T-cell (primary cell): ENCODE measurements at regions of chr1 and their contacts with region 1.

Region 1: GRCh38 chr1:205645519-205645918 is 13.7 kb upstream of the ELK4 start:
- DNase-seq: no peak
- ATAC-seq: no peak
- H3K4me3 ChIP-seq: no peak overlapping the region
- H3K4me3 Mint-ChIP-seq: no peak overlapping the region
- H3K27ac ChIP-seq: no peak overlapping the region
- H3K27ac Mint-ChIP-seq: no peak overlapping the region
- H3K4me1 ChIP-seq: no peaks in the 10 kb centered on the region
- H3K4me1 Mint-ChIP-seq: no peaks in the 10 kb centered on the region
- H3K27me3 ChIP-seq: peaks cover 0 to 11% of the 10 kb centered on the region in 2 experiments
- H3K27me3 Mint-ChIP-seq: peaks cover 12 to 18% of the 10 kb centered on the region in 2 donors

Region 2: DNA sequence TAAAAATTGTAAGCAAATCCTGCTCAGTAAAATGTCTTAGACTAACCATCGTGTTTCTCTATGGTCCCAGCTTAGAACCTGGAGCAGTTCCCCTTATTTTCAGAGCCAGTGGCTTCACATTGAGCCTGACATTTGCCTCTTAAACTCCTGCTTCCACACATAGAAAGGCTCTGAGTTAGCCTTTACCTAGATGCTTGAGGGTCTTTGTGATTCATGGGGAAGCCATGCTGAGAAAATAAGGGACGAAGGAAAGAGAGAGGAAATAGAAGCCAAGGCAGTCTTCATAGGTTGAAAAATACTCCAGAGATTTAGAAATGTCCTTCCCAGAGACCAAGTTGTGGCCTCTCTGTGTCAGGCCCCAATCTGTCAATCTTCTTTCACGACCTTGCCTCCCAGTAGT is 507.6 kb before region 1 on chr1:
- CTCF ChIA-PET with region 1: no interaction called
- POLR2A ChIA-PET with region 1: no interaction called
- DNase-seq: no peak
- ATAC-seq: no peak
- H3K4me3 ChIP-seq: no peak overlapping the region
- H3K4me3 Mint-ChIP-seq: no peak overlapping the region
- H3K27ac ChIP-seq: no peak overlapping the region
- H3K27ac Mint-ChIP-seq: no peak overlapping the region
- H3K4me1 ChIP-seq: peaks cover 0 to 9% of the 10 kb centered on the region in 2 experiments
- H3K4me1 Mint-ChIP-seq: peaks cover 6 to 12% (median 10%) of the 10 kb centered on the region in 3 donors
- H3K27me3 ChIP-seq: no peaks in the 10 kb centered on the region
- H3K27me3 Mint-ChIP-seq: no peaks in the 10 kb centered on the region

Region 3: DNA sequence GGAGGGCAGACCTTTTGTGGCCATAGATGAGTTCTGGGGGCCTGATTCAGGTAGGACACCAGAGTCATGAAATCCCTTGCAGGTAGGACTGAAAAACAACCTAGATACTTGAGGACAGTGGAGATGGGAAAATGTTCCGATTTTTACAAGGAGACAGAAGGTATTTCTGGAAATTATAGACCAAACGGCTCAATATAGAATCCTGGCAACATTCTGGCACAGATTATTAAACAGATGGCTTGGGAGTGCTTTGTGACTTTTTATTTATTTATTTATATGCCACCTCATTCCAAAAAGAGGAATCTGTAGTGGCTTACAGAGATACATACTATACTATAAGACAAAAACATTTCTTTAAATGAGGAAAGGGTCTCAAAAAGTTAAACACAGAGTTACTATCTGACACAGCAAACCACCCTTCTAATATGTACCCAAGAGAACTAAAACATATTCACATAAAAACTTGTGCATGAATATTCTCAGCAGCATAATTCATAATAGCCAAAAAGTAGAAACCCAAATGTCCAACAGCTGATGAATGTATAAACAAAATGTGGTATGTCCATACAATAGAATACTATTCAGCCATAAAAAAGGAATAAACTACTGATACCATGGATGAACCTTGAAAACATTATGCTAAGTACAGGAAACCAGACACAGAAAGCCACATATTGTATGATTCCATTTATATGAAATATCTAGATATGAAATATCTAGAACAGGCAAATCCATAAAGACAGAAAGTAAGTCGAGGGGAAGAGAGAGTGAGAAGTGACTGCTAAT is 91.3 kb before region 1 on chr1:
- CTCF ChIA-PET with region 1: no interaction called
- POLR2A ChIA-PET with region 1: interaction called in 1 of 2 experiments, 10 read pairs
- DNase-seq: no peak
- ATAC-seq: no peak
- H3K4me3 ChIP-seq: no peak overlapping the region
- H3K4me3 Mint-ChIP-seq: no peak overlapping the region
- H3K27ac ChIP-seq: no peak overlapping the region
- H3K27ac Mint-ChIP-seq: no peak overlapping the region
- H3K4me1 ChIP-seq: no peaks in the 10 kb centered on the region
- H3K4me1 Mint-ChIP-seq: no peaks in the 10 kb centered on the region
- H3K27me3 ChIP-seq: peaks cover 0 to 30% of the 10 kb centered on the region in 2 experiments
- H3K27me3 Mint-ChIP-seq: peaks cover 53 to 57% of the 10 kb centered on the region in 2 donors

Region 4: GRCh38 chr1:205626216-205626615 is 19.3 kb before region 1 on chr1:
- CTCF ChIA-PET with region 1: no interaction called
- POLR2A ChIA-PET with region 1: no interaction called
- DNase-seq: no peak
- ATAC-seq: no peak
- H3K4me3 ChIP-seq: no peak overlapping the region
- H3K4me3 Mint-ChIP-seq: peak overlapping the region in 2 of 3 donors; percentile 17 to 47
- H3K27ac ChIP-seq: no peak overlapping the region
- H3K27ac Mint-ChIP-seq: peak overlapping the region; percentile 29 to 49
- H3K4me1 ChIP-seq: peaks cover 26 to 37% of the 10 kb centered on the region in 2 experiments
- H3K4me1 Mint-ChIP-seq: peaks cover 71 to 77% (median 72%) of the 10 kb centered on the region in 3 donors
- H3K27me3 ChIP-seq: no peaks in the 10 kb centered on the region
- H3K27me3 Mint-ChIP-seq: no peaks in the 10 kb centered on the region

Region 5: DNA sequence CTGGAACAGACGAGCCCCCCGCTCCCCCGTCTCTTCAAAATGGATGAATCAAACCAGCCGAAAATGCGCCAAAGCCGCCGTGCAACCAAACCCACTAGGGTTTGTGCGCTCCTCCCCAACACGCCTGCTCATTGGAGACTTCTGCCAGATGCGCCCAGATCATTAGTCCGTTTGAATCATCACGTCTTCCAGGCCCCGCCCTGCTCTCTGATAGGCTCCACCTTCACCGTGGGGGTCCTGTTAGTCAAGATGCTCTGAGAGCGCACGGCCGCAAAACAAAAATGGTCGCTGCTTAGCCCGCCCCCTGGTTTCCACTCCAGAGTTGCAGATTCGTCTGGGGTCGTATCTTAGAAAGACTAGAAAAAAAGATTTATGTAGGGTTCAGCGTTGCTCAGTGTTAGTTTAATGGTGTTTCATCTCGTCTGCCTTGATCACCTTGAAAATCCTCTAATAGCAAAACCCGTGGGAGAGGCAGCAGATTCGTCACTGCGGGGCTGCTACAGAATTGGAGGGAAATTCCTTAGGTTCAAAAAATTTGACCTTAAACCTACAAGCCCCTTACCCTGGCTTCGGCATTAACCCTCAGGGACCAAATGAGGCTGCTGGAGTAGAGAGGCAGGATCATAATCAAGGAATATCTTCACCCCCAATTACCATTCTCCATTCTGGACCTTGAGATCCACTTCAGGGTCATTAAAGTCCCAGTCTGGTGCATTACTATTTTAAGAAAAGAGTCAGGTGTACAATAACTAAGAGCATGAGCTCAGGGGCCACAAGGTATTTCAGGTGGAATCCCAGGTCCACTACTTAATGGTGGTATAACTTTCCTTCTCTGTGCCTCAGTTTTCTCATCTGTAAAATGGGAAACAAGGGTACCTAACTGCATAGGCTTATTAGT is 104.9 kb after region 1 on chr1 and contains the start of gene NUCKS1:
- CTCF ChIA-PET with region 1: no interaction called
- POLR2A ChIA-PET with region 1: no interaction called
- DNase-seq: peak; percentile 92 to 99 (median 98)
- ATAC-seq: peak; percentile 82 to 88 (median 88)
- H3K4me3 ChIP-seq: peak within 1 kb of the TSS; percentile 86 to 90
- H3K4me3 Mint-ChIP-seq: peak within 1 kb of the TSS; percentile 93 to 98 (median 96)
- H3K27ac ChIP-seq: peak within 1 kb of the TSS; percentile 86
- H3K27ac Mint-ChIP-seq: peak within 1 kb of the TSS; percentile 96 to 99
- H3K4me1 ChIP-seq: peaks cover 8 to 23% of the 10 kb centered on the region in 2 experiments
- H3K4me1 Mint-ChIP-seq: peaks cover 34 to 41% (median 38%) of the 10 kb centered on the region in 3 donors
- H3K27me3 ChIP-seq: no peaks in the 10 kb centered on the region
- H3K27me3 Mint-ChIP-seq: no peaks in the 10 kb centered on the region
- total RNA-seq, gene NUCKS1: 84.0 to 101 (median 94.6) TPM

Region 6: GRCh38 chr1:205933671-205934618 is 288.4 kb after region 1 on chr1:
- CTCF ChIA-PET with region 1: no interaction called
- POLR2A ChIA-PET with region 1: no interaction called
- DNase-seq: no peak
- ATAC-seq: no peak
- H3K4me3 ChIP-seq: no peak overlapping the region
- H3K4me3 Mint-ChIP-seq: no peak overlapping the region
- H3K27ac ChIP-seq: no peak overlapping the region
- H3K27ac Mint-ChIP-seq: no peak overlapping the region
- H3K4me1 ChIP-seq: no peaks in the 10 kb centered on the region
- H3K4me1 Mint-ChIP-seq: no peaks in the 10 kb centered on the region
- H3K27me3 ChIP-seq: peaks cover 0 to 44% of the 10 kb centered on the region in 2 experiments
- H3K27me3 Mint-ChIP-seq: peaks cover 40 to 44% of the 10 kb centered on the region in 2 donors